Vagina (tissue), 2 donors: ENCODE measurements at regions of chr1 and their contacts with region 1.

Region 1: DNA sequence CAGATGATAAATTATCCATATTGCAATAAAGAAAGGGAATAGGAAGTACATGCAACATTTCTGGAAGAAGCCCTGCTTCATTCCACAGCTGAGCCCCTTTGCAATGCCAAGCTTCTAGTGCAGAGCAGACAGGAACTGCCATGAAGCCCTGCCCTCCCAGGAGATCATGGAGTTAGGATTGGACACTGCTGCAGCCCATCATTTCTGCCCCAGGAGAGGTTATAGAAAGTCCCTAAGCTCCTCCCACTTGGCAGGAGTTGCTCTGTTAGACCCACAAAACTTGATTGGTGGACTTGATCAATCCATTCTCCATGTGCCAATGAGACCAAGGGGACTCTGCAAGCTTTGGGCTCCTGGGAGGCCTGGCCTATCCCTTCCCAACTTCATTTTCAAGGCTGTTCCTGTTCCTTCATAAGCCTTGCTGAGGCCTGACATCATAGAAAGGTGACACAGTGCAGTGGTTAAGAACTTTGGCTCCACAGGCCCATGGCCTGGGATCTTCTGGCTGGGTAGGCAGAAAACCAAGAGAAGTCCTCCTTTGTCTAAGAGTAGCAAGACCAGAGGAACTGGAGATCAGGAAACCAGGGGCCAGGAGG is 1.3 kb upstream of the LAPTM5 start:
- DNase-seq: no peak
- H3K4me3 ChIP-seq: no peak overlapping the region
- H3K27ac ChIP-seq: no peak overlapping the region
- H3K4me1 ChIP-seq: no peaks in the 10 kb centered on the region
- H3K27me3 ChIP-seq: no peaks in the 10 kb centered on the region
- CTCF ChIP-seq: no peak
- POLR2A ChIP-seq: no peak

Region 2: DNA sequence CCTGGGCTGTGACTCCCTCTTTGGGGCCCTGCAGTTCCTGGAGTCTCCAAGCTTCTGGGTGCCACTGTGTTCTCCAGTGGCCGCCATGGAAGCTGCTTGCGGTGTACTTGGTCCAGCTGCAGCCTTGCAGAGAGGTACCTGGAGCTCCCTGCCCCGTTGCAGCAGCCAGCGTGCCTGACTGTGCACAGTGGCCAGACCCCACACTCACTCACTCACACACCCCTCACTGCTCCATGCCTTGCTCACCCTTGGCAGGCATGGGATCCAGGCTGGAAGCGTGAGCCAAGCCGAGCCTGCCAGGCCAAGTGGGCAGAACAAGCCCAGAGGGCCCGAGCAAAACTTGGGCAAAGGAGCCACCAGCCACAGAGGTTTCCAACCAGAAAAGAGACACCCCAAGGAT is 78.5 kb before region 1 on chr1:
- intact Hi-C with region 1: loop called (anchors 2 kb)
- DNase-seq: no peak
- H3K4me3 ChIP-seq: no peak overlapping the region
- H3K27ac ChIP-seq: peak overlapping the region; percentile 97
- H3K4me1 ChIP-seq: peaks cover 38% of the 10 kb centered on the region
- H3K27me3 ChIP-seq: no peaks in the 10 kb centered on the region
- CTCF ChIP-seq: no peak
- POLR2A ChIP-seq: no peak

Region 3: GRCh38 chr1:30779294-30780071 is 20.6 kb after region 1 on chr1:
- intact Hi-C with region 1: no loop called
- DNase-seq: no peak
- H3K4me3 ChIP-seq: no peak overlapping the region
- H3K27ac ChIP-seq: no peak overlapping the region
- H3K4me1 ChIP-seq: peaks cover 9% of the 10 kb centered on the region
- H3K27me3 ChIP-seq: no peaks in the 10 kb centered on the region
- CTCF ChIP-seq: peak; percentile 89 to 99 (median 98)
- POLR2A ChIP-seq: no peak